ENCODE measurements at regions of chr5 and their contacts with region 1.

Region 1: GRCh38 chr5:54743997-54744788 is 226.6 kb downstream of the SNX18 start:
- DNase-seq: peak in 8 of 9 donors; percentile 38 to 71 (median 52)
- ATAC-seq: peak; percentile 90
- H3K4me3 ChIP-seq: peak overlapping the region; percentile 9
- H3K4me3 Mint-ChIP-seq: peak overlapping the region in 9 of 10 donors; percentile 3 to 77 (median 35)
- H3K27ac ChIP-seq: no peak overlapping the region
- H3K27ac Mint-ChIP-seq: peak overlapping the region in 8 of 9 donors; percentile 25 to 82 (median 36)
- H3K4me1 ChIP-seq: peaks cover 11 to 35% of the 10 kb centered on the region in 2 donors
- H3K4me1 Mint-ChIP-seq: peaks cover 16 to 57% (median 20%) of the 10 kb centered on the region in 7 donors
- H3K27me3 ChIP-seq: no peaks in the 10 kb centered on the region
- H3K27me3 Mint-ChIP-seq: peaks cover 0 to 6% (median 4%) of the 10 kb centered on the region in 5 donors

Region 2: GRCh38 chr5:54610197-54610944 is 133.8 kb before region 1 on chr5:
- CTCF ChIA-PET with region 1: no interaction called
- POLR2A ChIA-PET with region 1: no interaction called
- intact Hi-C with region 1: loop called in 1 of 2 experiments (anchors 1 kb)
- DNase-seq: peak in 6 of 9 donors; percentile 8 to 36 (median 22)
- ATAC-seq: peak; percentile 89
- H3K4me3 ChIP-seq: peak overlapping the region; percentile 23
- H3K4me3 Mint-ChIP-seq: peak overlapping the region in 9 of 10 donors; percentile 14 to 75 (median 52)
- H3K27ac ChIP-seq: no peak overlapping the region
- H3K27ac Mint-ChIP-seq: peak overlapping the region in 8 of 9 donors; percentile 4 to 88 (median 50)
- H3K4me1 ChIP-seq: peaks cover 14 to 32% of the 10 kb centered on the region in 2 donors
- H3K4me1 Mint-ChIP-seq: peaks cover 19 to 32% (median 23%) of the 10 kb centered on the region in 7 donors
- H3K27me3 ChIP-seq: no peaks in the 10 kb centered on the region
- H3K27me3 Mint-ChIP-seq: peaks cover 0 to 8% (median 0%) of the 10 kb centered on the region in 5 donors

Region 3: DNA sequence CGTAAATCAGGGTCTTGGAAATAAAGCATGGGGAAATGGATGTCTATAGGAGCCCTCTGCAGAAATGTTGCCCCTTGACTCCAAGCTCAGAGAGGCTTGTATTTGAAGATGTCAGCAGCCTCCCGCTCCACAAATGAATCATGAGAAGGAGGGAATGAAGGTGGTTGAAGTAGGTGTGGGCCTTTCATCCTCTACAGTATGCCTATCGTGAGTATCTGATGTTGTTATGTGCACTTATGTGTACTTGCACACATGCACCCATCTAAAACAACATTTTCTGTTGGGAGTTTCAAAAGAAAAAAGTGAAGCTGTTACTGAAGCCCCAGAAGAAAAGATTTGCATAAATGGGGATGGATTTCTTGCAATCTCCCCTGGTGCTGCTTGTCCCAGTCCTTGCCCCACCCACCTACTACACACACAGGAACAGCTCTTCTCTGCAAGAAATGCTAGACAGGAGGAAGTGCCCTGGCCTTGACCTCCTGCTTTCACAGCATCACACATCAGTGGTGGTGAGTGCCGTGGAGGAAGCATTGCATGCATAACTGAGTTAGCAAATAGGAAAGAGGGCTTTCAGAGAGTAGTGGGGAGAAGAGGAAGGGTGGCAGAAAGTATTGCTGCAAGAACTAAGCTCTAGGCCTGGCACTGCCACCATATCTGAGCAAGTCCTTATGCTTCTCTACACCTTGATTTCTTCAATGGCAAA is 70.5 kb before region 1 on chr5:
- CTCF ChIA-PET with region 1: no interaction called
- POLR2A ChIA-PET with region 1: interaction called, 8 read pairs
- intact Hi-C with region 1: loop called in 1 of 2 experiments (anchors 2 kb)
- DNase-seq: peak in 7 of 9 donors; percentile 32 to 52 (median 39)
- ATAC-seq: peak; percentile 88
- H3K4me3 ChIP-seq: no peak overlapping the region
- H3K4me3 Mint-ChIP-seq: peak overlapping the region in 9 of 10 donors; percentile 9 to 67 (median 45)
- H3K27ac ChIP-seq: no peak overlapping the region
- H3K27ac Mint-ChIP-seq: peak overlapping the region; percentile 11 to 83 (median 56)
- H3K4me1 ChIP-seq: peaks cover 35 to 36% of the 10 kb centered on the region in 2 donors
- H3K4me1 Mint-ChIP-seq: peaks cover 40 to 74% (median 58%) of the 10 kb centered on the region in 7 donors
- H3K27me3 ChIP-seq: no peaks in the 10 kb centered on the region
- H3K27me3 Mint-ChIP-seq: peaks cover 0 to 5% (median 0%) of the 10 kb centered on the region in 5 donors

Region 4: GRCh38 chr5:54719384-54720283 is 24.6 kb before region 1 on chr5:
- CTCF ChIA-PET with region 1: no interaction called
- POLR2A ChIA-PET with region 1: interaction called, 3 read pairs
- intact Hi-C with region 1: loop called in 1 of 2 experiments (anchors 1 kb)
- DNase-seq: no peak
- ATAC-seq: no peak
- H3K4me3 ChIP-seq: no peak overlapping the region
- H3K4me3 Mint-ChIP-seq: no peak overlapping the region
- H3K27ac ChIP-seq: no peak overlapping the region
- H3K27ac Mint-ChIP-seq: peak overlapping the region in 1 of 9 donors; percentile 14
- H3K4me1 ChIP-seq: no peaks in the 10 kb centered on the region
- H3K4me1 Mint-ChIP-seq: peaks cover 0 to 33% (median 5%) of the 10 kb centered on the region in 7 donors
- H3K27me3 ChIP-seq: no peaks in the 10 kb centered on the region
- H3K27me3 Mint-ChIP-seq: peaks cover 0 to 5% (median 0%) of the 10 kb centered on the region in 5 donors

Region 5: DNA sequence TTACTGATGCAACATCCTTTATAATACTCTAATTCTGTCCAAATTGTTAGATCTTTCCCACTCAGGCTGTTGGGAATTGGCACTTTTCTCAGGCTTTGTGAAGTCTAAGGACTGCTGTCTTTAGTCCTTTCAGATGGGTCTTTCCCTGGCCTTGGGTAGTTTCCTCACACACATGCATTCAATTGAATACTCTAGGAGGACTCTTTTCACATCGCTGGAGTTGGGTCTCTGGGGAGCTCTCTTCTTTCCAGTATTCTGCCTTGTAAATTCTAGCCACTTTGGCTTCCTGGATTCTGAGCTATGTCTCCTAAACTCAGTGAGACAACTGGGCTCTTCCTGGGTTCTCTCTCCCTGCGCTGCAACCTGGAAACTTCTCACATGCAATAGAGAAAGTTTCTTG is 11.1 kb before region 1 on chr5:
- CTCF ChIA-PET with region 1: interaction called, 3 read pairs
- POLR2A ChIA-PET with region 1: interaction called, 12 read pairs
- intact Hi-C with region 1: no loop called
- DNase-seq: no peak
- ATAC-seq: no peak
- H3K4me3 ChIP-seq: no peak overlapping the region
- H3K4me3 Mint-ChIP-seq: no peak overlapping the region
- H3K27ac ChIP-seq: no peak overlapping the region
- H3K27ac Mint-ChIP-seq: no peak overlapping the region
- H3K4me1 ChIP-seq: no peaks in the 10 kb centered on the region
- H3K4me1 Mint-ChIP-seq: peaks cover 0 to 7% (median 0%) of the 10 kb centered on the region in 7 donors
- H3K27me3 ChIP-seq: no peaks in the 10 kb centered on the region
- H3K27me3 Mint-ChIP-seq: peaks cover 0 to 34% (median 0%) of the 10 kb centered on the region in 5 donors

Region 6: GRCh38 chr5:54792611-54793404 is 48.6 kb after region 1 on chr5:
- CTCF ChIA-PET with region 1: no interaction called
- POLR2A ChIA-PET with region 1: no interaction called
- intact Hi-C with region 1: loop called in 1 of 2 experiments (anchors 1 kb)
- DNase-seq: no peak
- ATAC-seq: no peak
- H3K4me3 ChIP-seq: no peak overlapping the region
- H3K4me3 Mint-ChIP-seq: peak overlapping the region in 1 of 10 donors; percentile 11
- H3K27ac ChIP-seq: no peak overlapping the region
- H3K27ac Mint-ChIP-seq: peak overlapping the region in 1 of 9 donors; percentile 65
- H3K4me1 ChIP-seq: no peaks in the 10 kb centered on the region
- H3K4me1 Mint-ChIP-seq: peaks cover 4 to 40% (median 16%) of the 10 kb centered on the region in 7 donors
- H3K27me3 ChIP-seq: no peaks in the 10 kb centered on the region
- H3K27me3 Mint-ChIP-seq: peaks cover 0 to 19% (median 4%) of the 10 kb centered on the region in 5 donors

Region 7: DNA sequence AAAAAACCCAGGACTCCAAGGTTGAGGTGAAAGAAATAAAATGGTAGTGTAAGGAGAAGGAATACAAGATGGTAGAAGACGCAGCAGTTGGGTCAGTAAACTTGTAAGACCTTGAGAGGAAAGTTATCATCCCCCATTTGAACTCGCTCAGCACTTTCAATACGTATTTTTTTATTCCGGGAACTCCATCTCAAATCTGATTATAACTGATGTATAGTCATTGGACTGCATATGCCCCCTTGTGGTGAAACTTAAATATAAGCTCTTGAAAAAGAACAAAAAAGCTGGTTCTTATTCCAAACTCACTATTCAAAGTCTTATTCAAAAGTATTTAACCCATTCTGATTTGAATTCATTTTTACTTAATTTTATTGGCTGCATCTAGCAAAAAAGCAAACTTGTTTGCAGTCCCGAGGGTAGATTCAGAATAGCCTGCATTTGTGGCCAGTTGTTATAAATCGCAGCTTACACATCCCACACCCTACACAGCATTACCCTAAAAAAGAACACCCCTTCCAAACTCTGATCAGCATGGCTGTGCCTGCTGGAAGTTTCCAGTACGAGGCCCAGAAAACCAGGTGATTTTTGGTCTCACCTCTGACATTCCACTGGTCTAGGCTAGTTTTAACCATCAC is 123.2 kb after region 1 on chr5:
- CTCF ChIA-PET with region 1: no interaction called
- POLR2A ChIA-PET with region 1: no interaction called
- intact Hi-C with region 1: no loop called
- DNase-seq: peak in 7 of 9 donors; percentile 38 to 66 (median 59)
- ATAC-seq: peak; percentile 83
- H3K4me3 ChIP-seq: peak overlapping the region; percentile 33
- H3K4me3 Mint-ChIP-seq: peak overlapping the region; percentile 2 to 80 (median 52)
- H3K27ac ChIP-seq: no peak overlapping the region
- H3K27ac Mint-ChIP-seq: peak overlapping the region in 4 of 9 donors; percentile 44 to 60 (median 52)
- H3K4me1 ChIP-seq: no peaks in the 10 kb centered on the region
- H3K4me1 Mint-ChIP-seq: peaks cover 0 to 20% (median 9%) of the 10 kb centered on the region in 7 donors
- H3K27me3 ChIP-seq: no peaks in the 10 kb centered on the region
- H3K27me3 Mint-ChIP-seq: peaks cover 0 to 69% (median 11%) of the 10 kb centered on the region in 5 donors

Measured in naive thymus-derived CD4-positive, alpha-beta T cell (primary cell).